Gastrocnemius medialis (tissue), 4 donors: ENCODE measurements at regions of chr16 and their contacts with region 1.

Region 1: GRCh38 chr16:74813109-74813641 is 38.6 kb upstream of the FA2H start:
- DNase-seq: peak; percentile 28 to 46
- ATAC-seq: peak; percentile 66 to 76
- H3K4me3 ChIP-seq: no peak overlapping the region
- H3K27ac ChIP-seq: no peak overlapping the region
- H3K4me1 ChIP-seq: no peaks in the 10 kb centered on the region
- H3K27me3 ChIP-seq: no peaks in the 10 kb centered on the region
- CTCF ChIP-seq: peak; percentile 61 to 86 (median 77)
- POLR2A ChIP-seq: no peak

Region 2: DNA sequence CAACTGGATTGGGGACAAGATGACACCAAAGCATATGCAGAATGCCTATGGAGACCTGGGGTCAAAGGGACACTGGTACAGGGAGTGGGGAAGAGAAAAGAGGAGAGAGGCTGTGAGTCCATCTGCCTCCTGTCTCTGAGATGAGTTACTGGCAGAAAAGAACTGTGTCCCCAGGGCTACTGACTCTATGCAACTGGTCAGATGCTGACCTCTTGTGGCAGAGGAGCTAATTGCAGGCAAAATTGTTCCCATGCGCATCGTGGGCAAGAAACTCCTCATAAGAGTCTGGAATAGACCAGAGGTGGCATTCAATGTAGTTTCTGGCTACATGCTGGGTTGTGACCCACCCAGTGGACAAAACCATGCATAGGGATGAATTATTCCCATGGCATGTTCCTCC is 86.5 kb before region 1 on chr16:
- in situ Hi-C with region 1: no loop called
- intact Hi-C with region 1: loop called (anchors 10 kb)
- DNase-seq: no peak
- ATAC-seq: no peak
- H3K4me3 ChIP-seq: no peak overlapping the region
- H3K27ac ChIP-seq: no peak overlapping the region
- H3K4me1 ChIP-seq: no peaks in the 10 kb centered on the region
- H3K27me3 ChIP-seq: peaks cover 0 to 7% (median 0%) of the 10 kb centered on the region in 3 donors
- CTCF ChIP-seq: no peak
- POLR2A ChIP-seq: no peak

Region 3: GRCh38 chr16:74862741-74863244 is 49.6 kb after region 1 on chr16:
- in situ Hi-C with region 1: no loop called
- intact Hi-C with region 1: loop called (anchors 5 kb)
- DNase-seq: no peak
- ATAC-seq: no peak
- H3K4me3 ChIP-seq: no peak overlapping the region
- H3K27ac ChIP-seq: no peak overlapping the region
- H3K4me1 ChIP-seq: no peaks in the 10 kb centered on the region
- H3K27me3 ChIP-seq: peaks cover 0 to 3% (median 0%) of the 10 kb centered on the region in 3 donors
- CTCF ChIP-seq: peak; percentile 44 to 81 (median 66)
- POLR2A ChIP-seq: no peak